GM10248 (cell line): ENCODE measurements at regions of chr1 and their contacts with region 1.

Region 1: GRCh38 chr1:41683681-41684500 is 199.4 kb upstream of the EDN2 start:
- DNase-seq: no peak
- CTCF ChIP-seq: no peak

Region 2: GRCh38 chr1:41670217-41670957 is 13.5 kb before region 1 on chr1:
- CTCF ChIA-PET with region 1: interaction called, 18 read pairs
- POLR2A ChIA-PET with region 1: interaction called, 3 read pairs
- DNase-seq: no peak
- CTCF ChIP-seq: no peak

Region 3: GRCh38 chr1:41695118-41695745 is 11.3 kb after region 1 on chr1:
- CTCF ChIA-PET with region 1: interaction called, 15 read pairs
- POLR2A ChIA-PET with region 1: no interaction called
- DNase-seq: no peak
- CTCF ChIP-seq: no peak